Mammary epithelial cell (primary cell): ENCODE measurements at regions of chr10 and their contacts with region 1.

Region 1: DNA sequence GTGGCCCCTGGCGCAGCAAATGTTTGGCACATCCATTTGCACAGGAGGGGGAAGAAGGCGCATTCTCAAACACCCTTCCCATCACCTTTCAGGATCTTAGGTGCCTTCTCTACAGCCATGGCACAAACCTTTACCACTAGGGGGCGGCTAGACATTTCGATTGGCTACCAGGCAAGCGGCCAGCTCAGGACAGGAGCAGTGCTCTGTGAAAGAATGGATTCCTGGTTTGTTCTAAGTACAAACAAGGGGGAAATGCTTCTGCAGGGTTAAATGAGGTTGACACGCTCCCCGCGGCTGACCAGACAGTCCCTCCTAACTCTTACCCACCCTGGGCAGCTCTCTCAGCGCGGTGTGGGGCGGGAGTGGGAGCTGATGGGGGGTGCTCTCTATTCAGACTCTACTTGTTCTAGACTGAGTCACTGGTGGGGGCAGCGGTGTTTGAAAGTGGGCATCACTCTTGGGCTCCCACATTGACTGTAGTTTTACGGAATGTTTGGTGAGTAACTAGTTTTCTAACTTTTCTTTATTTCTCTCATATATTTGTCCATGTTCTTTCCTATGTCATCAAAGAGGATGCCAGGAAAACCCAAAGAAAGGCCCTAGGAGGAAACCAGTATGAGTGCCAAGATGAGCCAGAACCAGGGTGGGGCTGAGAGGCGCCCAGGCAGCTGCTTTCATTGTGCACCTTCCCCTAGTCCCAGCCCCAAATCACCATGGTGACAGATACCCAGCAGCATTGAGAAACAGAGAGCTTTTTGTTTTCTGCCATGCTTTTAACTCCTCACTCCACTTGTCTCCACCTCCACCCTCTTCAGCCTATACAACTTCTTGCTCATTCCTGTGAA is 61.4 kb upstream of the GPR158 start:
- DNase-seq: peak; percentile 91
- H3K4me3 ChIP-seq: no peak overlapping the region
- H3K27ac ChIP-seq: peak overlapping the region; percentile 4
- H3K4me1 ChIP-seq: peaks cover 10% of the 10 kb centered on the region
- H3K27me3 ChIP-seq: no peaks in the 10 kb centered on the region
- CTCF ChIP-seq: peak; percentile 88 to 93

Region 2: DNA sequence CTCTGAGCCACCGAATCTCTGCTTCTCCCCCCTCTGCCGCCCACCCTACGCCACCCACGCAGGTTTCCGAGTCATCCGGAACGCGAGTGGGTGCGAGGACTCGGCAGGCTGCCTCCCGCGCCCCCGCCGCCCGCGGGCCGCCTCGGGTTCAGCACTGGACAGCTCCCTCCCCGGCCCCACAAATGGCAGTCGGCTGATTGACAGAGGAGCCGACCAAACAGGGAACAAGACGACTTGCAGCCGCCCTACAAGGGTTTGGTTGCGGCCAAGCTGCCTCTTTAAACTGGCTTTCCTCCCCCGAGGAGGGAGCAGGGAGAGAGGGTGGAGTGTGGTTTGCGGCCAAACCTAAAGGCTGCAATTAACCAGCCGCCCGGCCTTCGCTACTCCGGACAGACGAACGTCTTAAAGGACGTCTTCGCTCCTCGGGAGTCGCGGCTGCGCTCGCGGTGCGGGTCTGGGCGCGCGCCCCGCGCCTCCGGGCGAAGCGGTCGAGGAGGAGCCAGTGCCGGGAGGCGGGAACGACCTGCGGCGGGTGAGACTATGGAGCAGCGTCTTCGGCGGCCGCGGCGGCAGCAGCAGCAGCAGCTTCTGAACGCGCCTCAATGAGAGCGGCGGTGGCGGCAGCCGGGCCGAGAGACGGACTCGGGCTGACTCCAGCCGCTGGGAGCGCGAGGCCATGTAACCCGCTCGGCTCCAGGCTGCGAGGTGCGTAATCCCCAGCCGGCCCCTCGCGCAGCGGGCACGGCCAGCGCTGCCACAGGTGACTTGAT is 61.2 kb after region 1 on chr10 and contains the start of gene GPR158:
- CTCF ChIA-PET with region 1: no interaction called
- dilution Hi-C with region 1: no loop called
- in situ Hi-C with region 1: no loop called
- intact Hi-C with region 1: loop called (anchors 5 kb)
- DNase-seq: peak; percentile 91
- H3K4me3 ChIP-seq: peak within 1 kb of the TSS; percentile 48 to 51 (median 51)
- H3K27ac ChIP-seq: no peak within 1 kb of the TSS
- H3K4me1 ChIP-seq: peaks cover 5% of the 10 kb centered on the region
- H3K27me3 ChIP-seq: peaks cover 38% of the 10 kb centered on the region
- CTCF ChIP-seq: no peak
- total RNA-seq, gene GPR158: not detected

Region 3: DNA sequence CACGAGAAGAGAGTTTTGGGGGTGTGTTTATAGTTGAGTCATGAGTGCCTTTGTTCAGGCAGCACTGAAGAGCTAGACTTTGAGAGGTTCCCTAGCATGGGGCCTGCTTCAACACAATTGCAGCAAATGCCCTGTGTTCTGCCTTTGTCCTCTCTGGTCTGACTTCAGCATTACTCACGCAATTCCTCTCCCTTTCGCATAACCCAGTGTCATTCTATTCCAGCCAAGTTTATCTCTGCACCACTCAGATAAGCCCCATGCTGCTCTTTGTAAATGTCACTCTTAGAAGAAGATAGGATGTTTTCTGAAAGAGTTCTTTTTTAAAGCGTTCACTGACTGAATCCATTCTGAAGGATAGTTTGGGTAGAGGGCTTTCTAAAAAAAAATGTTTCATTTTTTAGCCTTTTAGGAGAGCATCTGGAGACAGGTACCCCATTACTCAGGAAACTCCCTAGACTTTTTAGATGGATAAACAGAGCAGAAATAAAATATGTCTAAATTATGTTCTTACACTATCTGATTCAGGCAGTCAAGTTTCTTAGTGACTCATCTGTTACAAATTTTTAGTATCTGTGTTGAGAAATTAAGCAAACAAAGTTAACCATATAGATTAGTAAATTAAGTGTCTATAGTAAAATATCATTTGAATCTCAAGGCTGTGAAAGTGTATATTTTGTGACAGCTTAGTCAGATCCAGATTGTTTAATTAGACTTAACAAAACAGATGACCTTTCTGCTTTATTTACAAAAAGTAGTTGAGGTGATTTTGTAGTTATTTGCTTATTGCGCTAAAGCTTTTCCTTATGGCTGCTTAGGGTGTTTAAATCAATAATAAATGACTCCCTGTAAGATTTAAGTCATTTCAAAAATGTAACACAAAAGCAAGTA is 380.0 kb after region 1 on chr10:
- CTCF ChIA-PET with region 1: no interaction called
- dilution Hi-C with region 1: no loop called
- in situ Hi-C with region 1: no loop called
- intact Hi-C with region 1: loop called (anchors 10 kb)
- DNase-seq: peak; percentile 91
- H3K4me3 ChIP-seq: no peak overlapping the region
- H3K27ac ChIP-seq: peak overlapping the region; percentile 78
- H3K4me1 ChIP-seq: no peaks in the 10 kb centered on the region
- H3K27me3 ChIP-seq: no peaks in the 10 kb centered on the region
- CTCF ChIP-seq: no peak

Region 4: GRCh38 chr10:25682203-25682851 is 568.9 kb after region 1 on chr10:
- CTCF ChIA-PET with region 1: no interaction called
- dilution Hi-C with region 1: no loop called
- in situ Hi-C with region 1: loop called in 1 of 2 experiments (anchors 25 kb)
- intact Hi-C with region 1: loop called (anchors 1 kb)
- DNase-seq: peak; percentile 2
- H3K4me3 ChIP-seq: no peak overlapping the region
- H3K27ac ChIP-seq: no peak overlapping the region
- H3K4me1 ChIP-seq: no peaks in the 10 kb centered on the region
- H3K27me3 ChIP-seq: no peaks in the 10 kb centered on the region
- CTCF ChIP-seq: peak in 1 of 2 donors; percentile 51

Region 5: GRCh38 chr10:25713894-25714240 is 600.5 kb after region 1 on chr10:
- CTCF ChIA-PET with region 1: no interaction called
- dilution Hi-C with region 1: no loop called
- in situ Hi-C with region 1: no loop called
- intact Hi-C with region 1: loop called (anchors 2 kb)
- DNase-seq: no peak
- H3K4me3 ChIP-seq: no peak overlapping the region
- H3K27ac ChIP-seq: no peak overlapping the region
- H3K4me1 ChIP-seq: no peaks in the 10 kb centered on the region
- H3K27me3 ChIP-seq: no peaks in the 10 kb centered on the region
- CTCF ChIP-seq: no peak